ENCODE measurements at regions of chr7 and their contacts with region 1.

Region 1: DNA sequence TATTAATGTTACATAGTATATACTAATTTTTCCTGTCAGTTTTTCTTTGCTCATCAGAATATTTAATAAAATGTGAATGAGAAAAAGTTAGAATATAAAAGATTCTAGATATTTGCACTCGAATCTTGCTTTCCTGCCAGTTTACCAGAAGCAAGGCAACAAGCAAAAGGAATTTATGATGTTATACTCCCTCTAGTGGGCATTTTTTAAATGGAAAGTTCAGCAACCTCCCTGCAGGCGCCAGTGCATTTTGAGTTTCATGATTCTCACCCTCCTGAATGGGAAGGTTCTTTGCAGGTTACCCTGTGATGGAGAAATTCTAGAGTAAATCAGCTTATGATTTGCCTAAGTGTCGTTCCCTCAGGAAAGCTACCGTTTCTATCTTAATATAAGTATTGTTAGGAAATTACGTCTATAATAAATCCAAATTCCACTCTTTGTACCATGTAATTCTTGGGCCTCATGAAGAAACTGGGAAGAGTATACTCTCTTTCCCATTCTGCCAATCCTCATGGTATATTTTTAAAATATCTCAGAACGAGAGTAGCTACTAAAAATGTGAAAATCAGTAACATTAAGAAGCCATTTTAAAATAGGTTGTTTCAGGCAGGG is 350.0 kb downstream of the CRPPA start:
- DNase-seq: no peak
- ATAC-seq: peak in 5 of 8 donors; percentile 34 to 73 (median 55)
- H3K4me3 ChIP-seq: peak overlapping the region in 5 of 10 donors; percentile 1 to 26 (median 3)
- H3K27ac ChIP-seq: peak overlapping the region in 5 of 10 donors; percentile 40 to 85 (median 83)
- H3K4me1 ChIP-seq: peaks cover 0 to 43% (median 15%) of the 10 kb centered on the region in 9 donors
- H3K27me3 ChIP-seq: no peaks in the 10 kb centered on the region
- CTCF ChIP-seq: peak; percentile 79 to 92 (median 84)

Region 2: GRCh38 chr7:15305002-15305600 is 766.3 kb before region 1 on chr7:
- intact Hi-C with region 1: loop called in 3 of 10 experiments (anchors 5 kb)
- DNase-seq: peak; percentile 16 to 53
- ATAC-seq: no peak
- H3K4me3 ChIP-seq: no peak overlapping the region
- H3K27ac ChIP-seq: no peak overlapping the region
- H3K4me1 ChIP-seq: no peaks in the 10 kb centered on the region
- H3K27me3 ChIP-seq: no peaks in the 10 kb centered on the region
- CTCF ChIP-seq: peak; percentile 50 to 83 (median 76)

Region 3: GRCh38 chr7:15555381-15555859 is 515.9 kb before region 1 on chr7:
- intact Hi-C with region 1: loop called in 5 of 10 experiments (anchors 5 to 10 kb)
- DNase-seq: no peak
- ATAC-seq: peak in 1 of 8 donors; percentile 52
- H3K4me3 ChIP-seq: no peak overlapping the region
- H3K27ac ChIP-seq: peak overlapping the region in 2 of 10 donors; percentile 79 to 89
- H3K4me1 ChIP-seq: peaks cover 0 to 42% (median 0%) of the 10 kb centered on the region in 9 donors
- H3K27me3 ChIP-seq: no peaks in the 10 kb centered on the region
- CTCF ChIP-seq: peak in 7 of 9 donors; percentile 7 to 58 (median 43)

Region 4: GRCh38 chr7:15577600-15577999 is 493.8 kb before region 1 on chr7:
- intact Hi-C with region 1: loop called in 1 of 10 experiments (anchors 5 kb)
- DNase-seq: no peak
- ATAC-seq: no peak
- H3K4me3 ChIP-seq: no peak overlapping the region
- H3K27ac ChIP-seq: no peak overlapping the region
- H3K4me1 ChIP-seq: peaks cover 0 to 16% (median 5%) of the 10 kb centered on the region in 9 donors
- H3K27me3 ChIP-seq: no peaks in the 10 kb centered on the region
- CTCF ChIP-seq: no peak

Region 5: DNA sequence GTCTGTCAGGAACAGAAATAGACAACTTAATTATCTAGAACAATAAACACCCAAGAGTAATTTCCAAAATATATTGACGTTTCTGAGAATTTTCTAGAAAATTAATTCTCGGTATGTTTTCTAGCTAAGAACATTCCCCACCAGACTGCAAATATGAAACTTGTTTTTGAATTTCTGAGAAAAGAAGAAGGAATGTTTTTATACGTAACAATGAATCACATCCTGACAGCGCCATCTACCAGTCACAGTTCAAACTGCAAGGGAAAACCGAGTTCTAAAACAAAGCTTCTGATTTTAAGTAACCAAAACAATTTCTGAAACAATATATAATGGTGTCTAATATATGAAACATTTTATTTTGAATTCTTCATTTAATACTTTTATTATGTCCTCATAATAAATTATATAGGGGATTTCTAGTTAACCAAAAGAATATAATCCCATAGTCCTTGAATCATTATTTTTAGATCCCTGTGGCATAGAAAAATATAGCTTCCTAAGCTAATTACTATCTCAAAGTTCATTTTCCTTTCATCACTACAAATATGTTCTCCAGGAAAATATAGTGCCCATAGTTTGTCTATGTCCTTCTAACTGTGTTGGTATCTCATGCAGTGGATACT is 350.4 kb before region 1 on chr7:
- intact Hi-C with region 1: loop called in 4 of 10 experiments (anchors 5 to 10 kb)
- DNase-seq: peak in 1 of 2 donors; percentile 52
- ATAC-seq: no peak
- H3K4me3 ChIP-seq: no peak overlapping the region
- H3K27ac ChIP-seq: peak overlapping the region in 3 of 10 donors; percentile 5 to 34 (median 9)
- H3K4me1 ChIP-seq: peaks cover 0 to 17% (median 4%) of the 10 kb centered on the region in 9 donors
- H3K27me3 ChIP-seq: no peaks in the 10 kb centered on the region
- CTCF ChIP-seq: peak; percentile 38 to 89 (median 72)

Region 6: GRCh38 chr7:15833008-15833407 is 238.3 kb before region 1 on chr7:
- intact Hi-C with region 1: loop called in 4 of 10 experiments (anchors 2 to 10 kb)
- DNase-seq: peak; percentile 60 to 74
- ATAC-seq: peak in 6 of 8 donors; percentile 28 to 70 (median 48)
- H3K4me3 ChIP-seq: no peak overlapping the region
- H3K27ac ChIP-seq: peak overlapping the region in 8 of 10 donors; percentile 2 to 61 (median 29)
- H3K4me1 ChIP-seq: peaks cover 0 to 51% (median 22%) of the 10 kb centered on the region in 9 donors
- H3K27me3 ChIP-seq: no peaks in the 10 kb centered on the region
- CTCF ChIP-seq: no peak

Region 7: GRCh38 chr7:15874774-15875173 is 196.6 kb before region 1 on chr7:
- intact Hi-C with region 1: no loop called
- DNase-seq: no peak
- ATAC-seq: peak in 4 of 8 donors; percentile 41 to 58 (median 50)
- H3K4me3 ChIP-seq: no peak overlapping the region
- H3K27ac ChIP-seq: peak overlapping the region in 3 of 10 donors; percentile 17 to 47 (median 21)
- H3K4me1 ChIP-seq: peaks cover 0 to 12% (median 0%) of the 10 kb centered on the region in 9 donors
- H3K27me3 ChIP-seq: no peaks in the 10 kb centered on the region
- CTCF ChIP-seq: no peak

Region 8: GRCh38 chr7:16564909-16565426 is 493.6 kb after region 1 on chr7:
- intact Hi-C with region 1: loop called in 5 of 10 experiments (anchors 2 to 5 kb)
- DNase-seq: no peak
- ATAC-seq: peak in 6 of 8 donors; percentile 45 to 64 (median 52)
- H3K4me3 ChIP-seq: no peak overlapping the region
- H3K27ac ChIP-seq: no peak overlapping the region
- H3K4me1 ChIP-seq: peaks cover 0 to 7% (median 0%) of the 10 kb centered on the region in 9 donors
- H3K27me3 ChIP-seq: no peaks in the 10 kb centered on the region
- CTCF ChIP-seq: peak; percentile 63 to 87 (median 82)

Measured in heart right ventricle (tissue), 16 donors.